Activated CD4-positive, alpha-beta memory T cell treated with anti-CD3 and anti-CD28 coated beads for 36 hours (primary cell): ENCODE measurements at regions of chr16 and their contacts with region 1.

Region 1: GRCh38 chr16:21184834-21185233 is 26.4 kb downstream of the LDAF1 start:
- DNase-seq: peak; percentile 48
- H3K4me3 Mint-ChIP-seq: no peak overlapping the region
- H3K27ac Mint-ChIP-seq: no peak overlapping the region
- H3K4me1 Mint-ChIP-seq: peaks cover 22% of the 10 kb centered on the region
- H3K27me3 Mint-ChIP-seq: peaks cover 2% of the 10 kb centered on the region

Region 2: DNA sequence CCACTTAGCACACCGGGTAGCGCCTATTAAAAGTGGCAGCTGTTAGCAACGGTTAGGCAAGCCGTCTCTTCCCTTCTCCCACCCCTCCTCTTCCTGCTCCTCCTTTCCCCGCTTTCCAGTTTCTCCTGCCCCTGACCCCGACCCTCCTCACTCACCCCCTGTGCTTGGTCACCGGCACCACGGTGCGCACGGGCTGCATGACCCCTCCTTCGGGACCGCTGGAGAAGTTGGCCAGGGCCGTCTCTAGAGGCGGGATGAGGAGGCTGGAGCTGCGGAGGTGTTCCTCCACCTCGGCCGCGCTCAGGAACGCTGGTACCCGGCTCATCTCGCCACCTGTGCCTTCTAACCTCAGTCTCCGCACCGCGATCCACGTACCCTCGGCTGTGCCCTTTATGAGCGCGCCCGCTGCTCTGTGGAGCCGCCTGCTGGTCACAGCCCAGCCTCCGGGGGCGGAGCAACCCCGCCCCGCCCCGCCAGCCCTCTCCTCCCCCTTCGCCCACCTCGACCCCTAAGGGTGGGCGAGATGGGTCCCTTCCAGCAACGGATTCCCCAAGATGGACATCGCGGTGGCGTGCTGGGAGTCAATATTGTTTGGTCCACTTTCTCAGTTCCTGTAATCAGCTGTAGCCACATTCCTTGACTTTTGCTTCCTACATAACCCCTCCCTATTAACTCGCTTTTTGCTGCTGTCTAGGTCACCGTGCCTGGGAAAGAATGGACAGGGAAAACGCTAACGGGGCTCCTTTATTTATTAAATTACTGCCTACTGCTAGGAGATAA is 93.3 kb after region 1 on chr16 and contains the start of gene CRYM:
- CTCF ChIA-PET with region 1: interaction called, 12 read pairs
- POLR2A ChIA-PET with region 1: no interaction called
- intact Hi-C with region 1: loop called (anchors 1 kb)
- DNase-seq: peak; percentile 68
- H3K4me3 Mint-ChIP-seq: peak within 1 kb of the TSS; percentile 25
- H3K27ac Mint-ChIP-seq: no peak within 1 kb of the TSS
- H3K4me1 Mint-ChIP-seq: no peaks in the 10 kb centered on the region
- H3K27me3 Mint-ChIP-seq: peaks cover 54% of the 10 kb centered on the region
- total RNA-seq, gene CRYM: not detected

Region 3: GRCh38 chr16:22321339-22322001 is 1136.6 kb after region 1 on chr16:
- CTCF ChIA-PET with region 1: no interaction called
- POLR2A ChIA-PET with region 1: no interaction called
- intact Hi-C with region 1: loop called (anchors 1 kb)
- DNase-seq: peak; percentile 82
- H3K4me3 Mint-ChIP-seq: no peak overlapping the region
- H3K27ac Mint-ChIP-seq: peak overlapping the region; percentile 38
- H3K4me1 Mint-ChIP-seq: peaks cover 9% of the 10 kb centered on the region
- H3K27me3 Mint-ChIP-seq: no peaks in the 10 kb centered on the region

Region 4: GRCh38 chr16:22816471-22816870 is 1631.6 kb after region 1 on chr16:
- CTCF ChIA-PET with region 1: no interaction called
- POLR2A ChIA-PET with region 1: no interaction called
- intact Hi-C with region 1: no loop called
- DNase-seq: no peak
- H3K4me3 Mint-ChIP-seq: no peak overlapping the region
- H3K27ac Mint-ChIP-seq: no peak overlapping the region
- H3K4me1 Mint-ChIP-seq: peaks cover 6% of the 10 kb centered on the region
- H3K27me3 Mint-ChIP-seq: peaks cover 36% of the 10 kb centered on the region